Endothelial cell of umbilical vein (primary cell): ENCODE measurements at regions of chr11 and their contacts with region 1.

Region 1: DNA sequence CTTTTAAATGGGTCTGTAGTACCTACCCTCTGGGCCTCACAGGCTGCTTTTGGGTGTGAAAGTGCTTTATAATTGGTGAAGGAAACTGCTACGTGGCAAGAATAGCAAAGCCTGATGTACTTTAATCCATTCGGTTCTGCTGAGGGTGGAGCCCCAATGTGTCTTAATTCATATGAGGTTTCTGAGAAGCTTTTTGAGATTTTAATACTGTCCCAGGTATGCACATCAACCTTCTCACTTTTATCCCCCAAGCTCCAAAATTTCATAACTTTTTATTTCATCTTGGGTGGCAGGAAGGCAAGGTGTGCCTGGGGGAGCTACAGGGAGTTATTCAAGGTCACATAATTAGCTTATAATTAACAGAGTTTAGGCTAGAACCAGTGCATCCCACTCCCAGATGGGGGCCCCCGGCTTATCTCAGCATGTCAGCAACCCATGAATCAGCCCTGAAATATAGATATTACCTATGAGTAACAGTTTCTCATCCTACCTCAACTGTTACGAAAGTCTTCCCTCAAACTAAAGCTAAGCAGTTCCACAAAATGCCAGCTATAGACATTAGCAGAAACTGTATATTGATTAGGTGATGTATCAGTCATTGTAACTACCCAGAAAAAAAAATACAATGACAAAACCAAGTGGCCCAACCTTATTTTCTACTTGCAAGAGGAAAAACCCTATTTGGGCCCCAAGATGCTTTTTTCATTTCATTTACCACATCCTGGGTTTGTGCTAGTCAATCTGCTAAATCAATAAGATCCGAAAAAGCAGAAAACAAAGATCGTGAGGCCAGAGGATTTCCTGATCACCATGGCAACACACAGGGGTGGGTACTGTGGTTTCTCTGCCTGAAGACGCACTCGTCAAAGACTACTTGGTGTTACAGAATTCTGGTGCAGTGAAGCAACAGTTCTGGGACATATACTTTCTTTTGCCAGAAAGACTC is 26.7 kb downstream of the CD44 start:
- DNase-seq: peak; percentile 48
- H3K4me3 ChIP-seq: no peak overlapping the region
- H3K27ac ChIP-seq: peak overlapping the region; percentile 84
- H3K4me1 ChIP-seq: peaks cover 39% of the 10 kb centered on the region
- H3K27me3 ChIP-seq: no peaks in the 10 kb centered on the region
- CTCF ChIP-seq: no peak
- POLR2A ChIP-seq: no peak

Region 2: DNA sequence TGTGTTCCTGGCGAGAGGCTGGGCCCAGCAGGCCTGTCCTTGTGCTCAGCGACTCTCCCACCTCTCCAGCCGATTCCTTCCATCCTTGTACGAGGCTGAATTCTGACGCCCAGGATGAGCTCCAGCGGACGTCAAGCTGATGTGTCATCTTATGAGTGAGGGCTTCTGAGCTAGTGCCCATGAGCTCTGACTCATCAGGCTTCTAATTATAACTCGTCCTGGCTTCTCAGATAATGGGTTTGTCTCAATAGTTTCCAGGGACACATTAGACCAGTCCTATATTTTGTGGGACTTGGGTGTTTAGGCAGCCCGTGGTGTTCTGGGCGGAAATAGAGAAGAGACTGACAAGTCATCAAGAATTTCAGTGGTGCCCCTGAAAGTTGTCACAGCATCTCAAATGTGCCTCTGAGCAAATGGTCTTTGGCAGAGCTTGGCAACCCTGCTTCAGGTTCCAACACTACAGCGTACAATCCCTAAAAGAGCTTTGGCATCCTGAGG is 134.9 kb before region 1 on chr11:
- CTCF ChIA-PET with region 1: interaction called, 6 read pairs
- POLR2A ChIA-PET with region 1: no interaction called
- dilution Hi-C with region 1: no loop called
- intact Hi-C with region 1: loop called (anchors 5 kb)
- DNase-seq: peak; percentile 73
- H3K4me3 ChIP-seq: no peak overlapping the region
- H3K27ac ChIP-seq: peak overlapping the region; percentile 82
- H3K4me1 ChIP-seq: peaks cover 27% of the 10 kb centered on the region
- H3K27me3 ChIP-seq: no peaks in the 10 kb centered on the region
- CTCF ChIP-seq: no peak
- POLR2A ChIP-seq: no peak